ENCODE measurements at regions of chr12 and their contacts with region 1.

Region 1: DNA sequence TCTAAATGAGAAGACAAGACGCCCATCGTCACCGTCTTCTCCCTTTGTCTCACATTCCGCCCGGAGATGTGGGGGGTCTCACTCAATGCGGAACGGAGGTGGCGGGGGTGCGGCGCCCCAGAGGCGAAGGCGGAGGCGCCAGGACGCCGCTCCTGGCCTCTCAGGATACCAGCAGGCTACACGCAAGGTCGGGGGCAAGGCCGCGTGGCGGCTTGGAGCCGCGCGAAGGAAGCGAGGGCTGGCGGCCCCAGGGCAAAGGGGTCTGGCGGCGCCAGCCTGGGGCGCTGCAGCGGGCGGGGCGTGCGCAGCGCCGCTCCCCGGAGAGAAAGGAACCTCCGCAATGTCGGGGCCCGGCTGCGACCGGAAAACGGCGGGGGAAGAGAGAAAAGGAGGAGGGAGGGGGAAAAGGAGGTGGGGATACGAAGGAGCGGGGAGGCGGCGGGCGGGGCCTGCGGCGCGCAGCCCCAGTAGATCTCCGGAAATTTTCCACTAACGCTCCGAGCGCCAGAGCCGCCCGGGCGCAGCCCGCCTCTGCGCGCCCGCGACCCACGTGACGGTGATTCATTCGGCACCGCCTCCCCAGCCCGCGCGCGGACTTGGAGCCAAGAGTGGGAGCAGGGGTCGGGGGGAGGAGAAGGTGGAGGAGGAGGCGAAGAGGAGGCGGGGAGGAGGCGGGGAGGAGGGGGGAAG is 10.5 kb upstream of the SLC38A2 start:
- DNase-seq: peak; percentile 98 to 99
- ATAC-seq: peak; percentile 97
- H3K4me3 ChIP-seq: peak overlapping the region; percentile 79 to 85
- H3K27ac ChIP-seq: peak overlapping the region; percentile 96 to 98
- H3K4me1 ChIP-seq: peaks cover 0 to 2% of the 10 kb centered on the region in 2 donors
- H3K27me3 ChIP-seq: no peaks in the 10 kb centered on the region

Region 2: GRCh38 chr12:46372544-46373110 is 10.5 kb before region 1 on chr12 and contains the start of gene SLC38A2:
- intact Hi-C with region 1: loop called in 1 of 2 experiments (anchors 1 kb)
- DNase-seq: peak; percentile 99 to 100
- ATAC-seq: peak; percentile 97
- H3K4me3 ChIP-seq: peak within 1 kb of the TSS; percentile 88 to 93
- H3K27ac ChIP-seq: peak within 1 kb of the TSS; percentile 92 to 97
- H3K4me1 ChIP-seq: peaks cover 3 to 6% of the 10 kb centered on the region in 2 donors
- H3K27me3 ChIP-seq: no peaks in the 10 kb centered on the region
- total RNA-seq, gene SLC38A2: 329 to 405 TPM

Region 3: GRCh38 chr12:46468159-46468558 is 85.0 kb after region 1 on chr12:
- intact Hi-C with region 1: loop called (anchors 5 kb)
- DNase-seq: peak in 1 of 2 donors; percentile 48
- ATAC-seq: no peak
- H3K4me3 ChIP-seq: no peak overlapping the region
- H3K27ac ChIP-seq: no peak overlapping the region
- H3K4me1 ChIP-seq: peaks cover 0 to 7% of the 10 kb centered on the region in 2 donors
- H3K27me3 ChIP-seq: no peaks in the 10 kb centered on the region

Region 4: GRCh38 chr12:46473634-46474329 is 90.7 kb after region 1 on chr12:
- intact Hi-C with region 1: loop called (anchors 5 kb)
- DNase-seq: peak; percentile 83 to 85
- ATAC-seq: peak; percentile 88
- H3K4me3 ChIP-seq: peak overlapping the region in 1 of 2 donors; percentile 34
- H3K27ac ChIP-seq: peak overlapping the region; percentile 72 to 95
- H3K4me1 ChIP-seq: peaks cover 0 to 3% of the 10 kb centered on the region in 2 donors
- H3K27me3 ChIP-seq: no peaks in the 10 kb centered on the region

Region 5: DNA sequence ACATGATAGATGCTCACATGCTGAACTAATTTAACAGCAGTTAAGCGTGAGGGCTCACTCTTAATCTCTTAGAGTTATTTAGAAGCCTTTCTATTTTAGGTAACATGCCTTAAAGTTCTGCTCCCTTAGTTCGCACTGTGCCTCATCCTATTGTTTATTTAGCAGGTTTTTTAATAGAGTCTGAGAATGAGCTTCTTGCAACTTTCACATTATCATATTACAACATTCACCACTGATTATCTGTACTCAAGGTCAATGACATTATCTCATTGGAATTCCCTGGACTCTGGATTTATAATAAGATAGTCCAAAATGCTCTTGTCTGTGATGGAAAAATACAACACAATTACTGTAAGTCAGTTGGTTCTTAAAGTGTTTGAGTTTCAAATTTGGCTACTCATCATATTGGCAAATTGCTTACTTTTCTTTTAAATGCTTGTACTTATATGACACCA is 173.0 kb after region 1 on chr12:
- intact Hi-C with region 1: loop called in 1 of 2 experiments (anchors 10 kb)
- DNase-seq: no peak
- ATAC-seq: peak; percentile 64
- H3K4me3 ChIP-seq: no peak overlapping the region
- H3K27ac ChIP-seq: no peak overlapping the region
- H3K4me1 ChIP-seq: peaks cover 3 to 4% of the 10 kb centered on the region in 2 donors
- H3K27me3 ChIP-seq: no peaks in the 10 kb centered on the region

Region 6: DNA sequence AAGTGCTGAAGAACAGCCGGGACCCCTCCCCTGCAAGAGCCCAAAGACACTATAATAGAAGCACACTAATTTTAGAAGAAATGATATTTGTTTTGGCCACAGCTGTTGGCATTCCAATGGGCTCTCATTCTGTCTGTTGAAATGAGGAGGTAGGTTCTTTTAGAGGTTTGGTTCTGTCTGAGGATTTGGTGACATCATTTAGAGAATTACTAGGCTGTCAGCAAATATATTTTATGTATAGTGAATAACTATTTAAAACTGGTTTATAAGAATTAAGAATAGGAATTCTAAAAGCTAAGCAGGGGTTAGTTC is 190.2 kb after region 1 on chr12:
- intact Hi-C with region 1: loop called in 1 of 2 experiments (anchors 10 kb)
- DNase-seq: no peak
- ATAC-seq: peak; percentile 33
- H3K4me3 ChIP-seq: no peak overlapping the region
- H3K27ac ChIP-seq: no peak overlapping the region
- H3K4me1 ChIP-seq: peaks cover 0 to 11% of the 10 kb centered on the region in 2 donors
- H3K27me3 ChIP-seq: no peaks in the 10 kb centered on the region

Region 7: GRCh38 chr12:47812797-47813510 is 1429.8 kb after region 1 on chr12:
- intact Hi-C with region 1: loop called in 1 of 2 experiments (anchors 10 kb)
- DNase-seq: peak; percentile 97 to 98
- ATAC-seq: peak; percentile 89
- H3K4me3 ChIP-seq: no peak overlapping the region
- H3K27ac ChIP-seq: peak overlapping the region; percentile 94 to 100
- H3K4me1 ChIP-seq: peaks cover 3 to 11% of the 10 kb centered on the region in 2 donors
- H3K27me3 ChIP-seq: no peaks in the 10 kb centered on the region